Dendritic cell treated with granulocyte-macrophage colony-stimulating factor and Interleukin-4, amounts not matched to agents 40 ng/mL and 50 ng/mL, for 4 days (primary cell): ENCODE measurements at regions of chr19 and their contacts with region 1.

Region 1: DNA sequence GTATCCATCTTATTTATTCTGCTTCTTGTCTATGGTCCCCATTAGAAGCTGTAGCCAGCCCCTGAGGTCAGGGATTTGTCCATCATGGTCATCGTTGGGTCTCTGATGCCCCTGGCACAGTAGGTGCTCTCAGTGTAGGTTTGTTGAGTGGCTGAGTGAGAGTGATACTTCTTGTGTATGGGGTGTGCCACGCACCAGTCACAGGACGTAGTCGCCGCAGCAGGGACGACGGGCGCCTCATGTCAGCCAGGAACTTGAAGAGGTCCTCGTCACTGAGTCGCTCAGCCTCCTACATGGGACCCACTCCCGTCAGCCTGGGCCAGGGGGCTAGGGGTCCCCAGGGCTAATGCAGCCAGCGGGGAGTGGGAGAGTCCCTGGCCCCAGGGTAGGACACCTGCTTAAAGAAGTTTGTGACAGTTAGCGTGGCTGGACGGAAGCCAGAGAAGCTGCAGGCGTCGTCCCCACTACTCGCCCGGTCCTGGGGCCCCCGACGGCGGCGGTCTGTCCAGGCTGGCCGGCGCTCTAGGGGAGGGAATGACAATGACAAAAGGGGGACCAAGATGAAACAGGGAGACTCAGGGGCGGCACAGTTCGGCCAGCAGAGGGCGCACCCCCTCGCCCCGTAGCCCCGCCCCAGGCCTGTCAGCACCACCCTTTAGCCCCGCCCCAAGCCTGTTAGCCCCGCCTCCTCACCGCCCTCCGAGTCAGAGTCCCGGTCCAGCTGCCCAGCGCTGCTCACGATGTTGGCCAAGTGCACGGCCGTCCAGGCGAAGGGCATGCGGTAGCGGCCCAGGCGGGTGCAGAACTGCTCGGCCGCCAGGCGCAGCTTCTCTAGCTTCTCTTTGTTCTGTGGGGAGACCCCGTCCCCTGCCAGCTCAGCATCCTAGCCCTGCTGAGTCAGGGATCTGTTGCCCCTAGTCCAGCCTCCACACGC is 3.7 kb downstream of the ANGPTL8 start:
- H3K4me3 Mint-ChIP-seq: peak overlapping the region; percentile 24
- H3K27ac Mint-ChIP-seq: no peak overlapping the region
- H3K4me1 Mint-ChIP-seq: peaks cover 13% of the 10 kb centered on the region
- H3K27me3 Mint-ChIP-seq: peaks cover 42% of the 10 kb centered on the region

Region 2: GRCh38 chr19:11293433-11294389 is 50.6 kb after region 1 on chr19:
- intact Hi-C with region 1: loop called (anchors 5 kb)
- H3K4me3 Mint-ChIP-seq: peak overlapping the region; percentile 61
- H3K27ac Mint-ChIP-seq: peak overlapping the region; percentile 48
- H3K4me1 Mint-ChIP-seq: peaks cover 53% of the 10 kb centered on the region
- H3K27me3 Mint-ChIP-seq: peaks cover 4% of the 10 kb centered on the region

Region 3: GRCh38 chr19:11446652-11447301 is 203.6 kb after region 1 on chr19:
- intact Hi-C with region 1: loop called (anchors 10 kb)
- H3K4me3 Mint-ChIP-seq: no peak overlapping the region
- H3K27ac Mint-ChIP-seq: no peak overlapping the region
- H3K4me1 Mint-ChIP-seq: peaks cover 3% of the 10 kb centered on the region
- H3K27me3 Mint-ChIP-seq: no peaks in the 10 kb centered on the region

Region 4: GRCh38 chr19:11482384-11483050 is 239.4 kb after region 1 on chr19:
- intact Hi-C with region 1: loop called (anchors 5 kb)
- H3K4me3 Mint-ChIP-seq: peak overlapping the region; percentile 81
- H3K27ac Mint-ChIP-seq: peak overlapping the region; percentile 86
- H3K4me1 Mint-ChIP-seq: peaks cover 36% of the 10 kb centered on the region
- H3K27me3 Mint-ChIP-seq: peaks cover 48% of the 10 kb centered on the region